Ovary (tissue), 10 donors: ENCODE measurements at regions of chr5 and their contacts with region 1.

Region 1: DNA sequence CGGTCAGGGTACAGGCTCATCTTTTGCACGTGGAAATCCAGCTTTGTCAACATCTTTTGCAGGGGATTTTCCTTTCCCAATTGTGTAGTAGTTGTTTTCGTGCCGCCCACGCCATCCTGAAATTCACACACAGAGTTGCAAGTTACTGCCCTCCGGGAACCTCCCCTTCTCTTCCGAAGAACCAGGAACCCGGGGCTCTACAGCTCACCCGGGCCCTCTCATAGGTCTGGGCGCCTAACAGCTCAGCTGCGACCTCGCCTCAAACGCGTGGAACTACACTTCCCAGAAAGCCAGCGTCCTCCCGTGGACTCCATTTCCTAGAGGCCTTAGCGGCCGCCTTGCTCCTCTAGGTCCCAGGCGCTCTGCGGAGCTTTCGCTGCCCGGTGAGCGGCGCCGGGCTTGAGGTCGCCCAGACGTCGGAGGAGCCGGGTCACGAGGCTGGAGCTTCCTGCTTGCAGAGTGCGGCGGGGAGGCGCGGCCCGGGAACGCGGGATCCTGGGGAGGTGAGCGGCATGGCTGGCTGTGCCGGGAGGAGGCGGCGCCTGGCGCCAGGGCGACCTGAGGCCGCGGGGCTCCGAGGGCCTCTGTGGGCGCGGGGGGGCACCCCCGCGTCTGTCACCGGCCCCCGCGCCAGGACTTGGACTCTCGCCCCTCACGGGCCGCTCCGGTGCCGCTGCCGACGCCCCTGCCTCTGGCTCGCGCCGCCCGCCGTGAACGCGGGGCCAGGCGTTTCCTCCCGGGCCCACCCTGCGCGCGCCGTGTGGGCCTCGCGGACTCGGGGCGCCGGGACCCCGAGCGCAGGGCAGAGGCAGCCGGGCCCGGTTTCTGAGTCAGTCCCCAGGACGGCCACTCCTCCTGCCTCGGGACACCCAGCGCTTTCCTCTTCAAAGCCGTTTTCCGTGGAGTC is at the start of gene ZNF354B:
- DNase-seq: peak; percentile 84 to 89 (median 86)
- H3K4me3 ChIP-seq: peak within 1 kb of the TSS; percentile 76
- H3K27ac ChIP-seq: peak within 1 kb of the TSS; percentile 71 to 84
- H3K4me1 ChIP-seq: peaks cover 2% of the 10 kb centered on the region
- H3K27me3 ChIP-seq: no peaks in the 10 kb centered on the region
- CTCF ChIP-seq: no peak
- EP300 ChIP-seq: no peak
- POLR2A ChIP-seq: peak; percentile 50
- total RNA-seq, gene ZNF354B: 15.0 to 21.8 (median 16.3) TPM

Region 2: DNA sequence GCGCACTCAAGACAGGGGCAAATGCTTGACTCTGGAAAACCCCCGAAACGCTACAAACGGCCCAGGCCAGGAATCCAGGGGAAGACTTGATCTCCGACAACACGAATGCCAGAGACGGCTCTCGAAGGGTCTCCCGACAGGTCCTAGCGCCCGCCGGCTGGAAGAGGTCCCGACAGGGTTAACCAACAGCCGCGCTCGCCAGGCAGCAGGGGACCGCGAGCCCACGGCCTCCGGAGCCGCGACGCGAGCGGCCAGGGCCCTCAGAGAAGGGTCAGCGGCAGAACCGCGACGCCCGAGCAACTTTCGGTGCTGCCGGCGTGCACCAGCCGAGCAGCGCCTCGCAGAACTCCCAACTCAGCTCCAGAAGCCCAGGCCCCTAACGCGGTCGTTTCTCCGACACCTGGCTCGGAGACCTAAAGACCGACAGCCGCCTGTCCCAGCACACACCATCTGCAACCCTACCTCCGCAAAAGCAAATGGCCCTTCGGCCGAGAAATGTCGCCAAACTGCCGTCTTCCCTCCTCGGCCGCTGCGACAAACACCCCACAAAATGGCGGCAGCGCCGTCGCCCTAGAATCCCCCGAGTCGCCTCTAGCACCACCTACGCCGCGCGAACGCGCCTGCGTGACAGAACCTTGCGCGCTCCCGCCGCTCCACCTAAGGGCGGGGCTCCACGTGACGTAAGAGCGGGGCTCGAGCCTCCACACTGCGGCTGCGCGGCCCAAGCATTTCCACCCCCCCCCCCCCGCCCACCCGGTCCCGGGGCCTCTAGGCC is 233.2 kb before region 1 on chr5 and contains the start of gene CLK4:
- intact Hi-C with region 1: loop called in 1 of 4 experiments (anchors 5 kb)
- DNase-seq: peak; percentile 95 to 98 (median 97)
- H3K4me3 ChIP-seq: peak within 1 kb of the TSS; percentile 74
- H3K27ac ChIP-seq: peak within 1 kb of the TSS; percentile 95
- H3K4me1 ChIP-seq: peaks cover 3% of the 10 kb centered on the region
- H3K27me3 ChIP-seq: no peaks in the 10 kb centered on the region
- CTCF ChIP-seq: no peak
- EP300 ChIP-seq: no peak
- POLR2A ChIP-seq: peak; percentile 59
- total RNA-seq, gene CLK4: 21.2 to 40.1 (median 25.5) TPM

Region 3: GRCh38 chr5:178732281-178732680 is 127.6 kb before region 1 on chr5:
- intact Hi-C with region 1: loop called in 2 of 4 experiments (anchors 5 to 10 kb)
- DNase-seq: no peak
- H3K4me3 ChIP-seq: no peak overlapping the region
- H3K27ac ChIP-seq: no peak overlapping the region
- H3K4me1 ChIP-seq: peaks cover 2% of the 10 kb centered on the region
- H3K27me3 ChIP-seq: no peaks in the 10 kb centered on the region
- CTCF ChIP-seq: no peak
- EP300 ChIP-seq: no peak
- POLR2A ChIP-seq: no peak

Region 4: GRCh38 chr5:178801021-178801420 is 58.9 kb before region 1 on chr5:
- intact Hi-C with region 1: no loop called
- DNase-seq: no peak
- H3K4me3 ChIP-seq: no peak overlapping the region
- H3K27ac ChIP-seq: no peak overlapping the region
- H3K4me1 ChIP-seq: no peaks in the 10 kb centered on the region
- H3K27me3 ChIP-seq: no peaks in the 10 kb centered on the region
- CTCF ChIP-seq: no peak
- EP300 ChIP-seq: no peak
- POLR2A ChIP-seq: no peak

Region 5: DNA sequence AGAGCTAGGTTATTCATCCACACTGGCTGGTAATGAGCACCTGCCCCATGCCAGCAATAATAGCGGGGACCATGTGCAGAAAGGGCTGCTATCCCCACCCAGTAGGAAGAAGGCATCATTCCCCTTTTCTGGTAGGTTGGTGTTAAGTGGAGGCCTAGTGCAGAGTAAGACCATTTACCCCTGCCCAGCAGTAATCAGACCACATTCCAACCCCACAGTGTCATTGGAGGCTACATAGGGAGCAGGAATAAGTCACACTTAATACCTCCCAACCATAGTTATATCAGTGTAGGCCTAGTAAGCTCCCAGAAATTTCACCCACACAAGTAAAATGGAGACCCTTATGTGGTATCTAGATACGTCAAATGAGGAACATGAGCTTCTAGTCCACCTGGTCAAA is 30.2 kb after region 1 on chr5:
- intact Hi-C with region 1: no loop called
- DNase-seq: no peak
- H3K4me3 ChIP-seq: no peak overlapping the region
- H3K27ac ChIP-seq: no peak overlapping the region
- H3K4me1 ChIP-seq: no peaks in the 10 kb centered on the region
- H3K27me3 ChIP-seq: no peaks in the 10 kb centered on the region
- CTCF ChIP-seq: no peak
- EP300 ChIP-seq: no peak
- POLR2A ChIP-seq: no peak

Region 6: DNA sequence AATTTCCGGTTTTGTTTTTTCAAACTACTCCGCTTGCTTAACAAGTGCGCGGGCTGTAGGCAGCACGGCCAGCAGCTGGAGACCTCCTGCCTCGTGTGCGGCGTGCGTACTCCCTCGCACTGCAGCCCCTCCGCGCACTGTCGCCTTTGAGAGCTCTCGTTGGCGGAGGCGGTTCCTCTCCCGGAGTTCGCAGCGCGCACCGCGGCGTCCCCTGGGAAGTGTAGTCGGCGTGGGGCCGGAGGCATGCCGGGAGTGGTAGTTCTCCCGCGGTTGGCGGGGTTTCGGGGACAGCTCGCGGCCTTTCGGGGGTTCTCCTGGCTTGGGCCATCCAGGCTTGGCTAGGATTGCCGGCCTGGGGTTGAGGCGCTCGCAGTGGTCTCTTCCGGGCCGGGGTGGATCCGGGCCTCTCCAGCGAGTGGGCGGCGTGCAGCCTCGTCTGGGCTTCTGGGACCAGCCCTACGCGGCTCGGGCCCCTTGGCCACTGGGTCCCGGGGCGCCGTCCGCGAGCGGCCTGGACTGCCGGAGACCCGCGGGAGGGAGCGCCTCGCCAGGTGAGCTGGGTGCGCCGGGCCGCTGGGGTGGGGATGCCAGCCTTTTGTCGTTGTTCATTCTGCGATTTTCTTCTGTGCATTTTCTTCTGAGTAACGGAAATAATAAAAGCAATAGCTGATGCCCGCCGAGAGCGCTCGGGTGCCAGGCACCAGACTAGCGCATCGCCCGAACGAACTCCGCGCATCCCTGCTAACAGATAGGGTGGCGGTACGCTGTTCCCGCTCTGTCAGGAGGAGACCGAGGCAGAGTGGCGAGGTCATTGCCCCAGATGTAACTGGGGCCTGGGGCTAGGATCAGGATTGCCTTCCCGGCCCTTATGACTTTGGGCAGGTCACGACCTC is 200.5 kb after region 1 on chr5 and contains the start of gene ZNF354C:
- intact Hi-C with region 1: loop called in 1 of 4 experiments (anchors 10 kb)
- DNase-seq: peak; percentile 86 to 93 (median 90)
- H3K4me3 ChIP-seq: peak within 1 kb of the TSS; percentile 96
- H3K27ac ChIP-seq: peak within 1 kb of the TSS; percentile 43 to 71
- H3K4me1 ChIP-seq: peaks cover 3% of the 10 kb centered on the region
- H3K27me3 ChIP-seq: no peaks in the 10 kb centered on the region
- CTCF ChIP-seq: no peak
- EP300 ChIP-seq: no peak
- POLR2A ChIP-seq: no peak
- total RNA-seq, gene ZNF354C: 4.9 to 11.8 (median 10.0) TPM